Head of caudate nucleus (tissue), 42 donors: ENCODE measurements at regions of chr13 and their contacts with region 1.

Region 1: GRCh38 chr13:94435604-94436226 is 43.8 kb downstream of the DCT start:
- DNase-seq: peak in 1 of 42 donors; percentile 20

Region 2: GRCh38 chr13:94384231-94384905 is 51.3 kb before region 1 on chr13:
- intact Hi-C with region 1: no loop called
- DNase-seq: no peak

Region 3: GRCh38 chr13:94617389-94618000 is 181.8 kb after region 1 on chr13:
- intact Hi-C with region 1: loop called (anchors 2 kb)
- DNase-seq: peak in 16 of 42 donors; percentile 20 to 75 (median 40)

Region 4: GRCh38 chr13:95156208-95156607 is 720.5 kb after region 1 on chr13:
- intact Hi-C with region 1: loop called (anchors 10 kb)
- DNase-seq: peak in 3 of 42 donors; percentile 9 to 24 (median 21)